Caco-2 (cell line): ENCODE measurements at regions of chr2 and their contacts with region 1.

Region 1: GRCh38 chr2:15636972-15637785 is 45.5 kb downstream of the DDX1 start:
- DNase-seq: peak; percentile 72 to 80
- H3K4me3 ChIP-seq: no peak overlapping the region
- H3K4me3 Mint-ChIP-seq: no peak overlapping the region
- H3K27ac Mint-ChIP-seq: no peak overlapping the region
- H3K4me1 ChIP-seq: peaks cover 55% of the 10 kb centered on the region
- H3K4me1 Mint-ChIP-seq: peaks cover 32% of the 10 kb centered on the region
- H3K27me3 ChIP-seq: no peaks in the 10 kb centered on the region
- H3K27me3 Mint-ChIP-seq: no peaks in the 10 kb centered on the region
- CTCF ChIP-seq: peak; percentile 85 to 98

Region 2: DNA sequence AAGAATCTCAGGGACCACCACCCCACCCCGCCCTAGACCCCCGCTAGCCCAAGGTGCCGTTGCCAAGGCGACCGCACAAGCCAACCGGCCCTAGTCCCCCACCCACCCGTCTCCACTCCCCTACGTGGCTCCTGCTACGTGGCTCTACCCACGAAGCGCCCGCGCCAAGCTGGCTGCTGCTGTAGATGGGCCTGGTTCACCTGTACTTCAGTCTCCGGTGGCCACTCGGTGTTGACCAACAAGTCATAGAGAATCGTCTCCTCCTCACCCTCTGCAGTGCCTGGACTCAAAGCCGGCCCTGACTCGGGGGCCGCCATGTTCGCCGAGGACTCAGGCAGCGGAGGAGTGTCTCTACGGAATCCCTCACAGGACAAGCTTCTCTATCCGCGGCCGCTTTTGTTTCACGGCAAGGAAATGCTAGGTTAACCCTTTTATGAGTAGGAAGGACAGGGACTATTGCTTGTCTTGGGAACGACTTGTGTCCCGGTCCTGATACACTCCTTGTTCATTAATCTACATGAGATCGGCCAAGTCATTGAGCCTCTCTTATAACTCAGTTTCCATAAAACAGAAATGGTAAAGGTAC is 76.1 kb before region 1 on chr2 and contains the start of gene NBAS:
- CTCF ChIA-PET with region 1: no interaction called
- POLR2A ChIA-PET with region 1: no interaction called
- intact Hi-C with region 1: no loop called
- DNase-seq: peak; percentile 90 to 92
- H3K4me3 ChIP-seq: peak within 1 kb of the TSS; percentile 91
- H3K4me3 Mint-ChIP-seq: peak within 1 kb of the TSS; percentile 79
- H3K27ac Mint-ChIP-seq: peak within 1 kb of the TSS; percentile 69
- H3K4me1 ChIP-seq: peaks cover 10% of the 10 kb centered on the region
- H3K4me1 Mint-ChIP-seq: peaks cover 12% of the 10 kb centered on the region
- H3K27me3 ChIP-seq: no peaks in the 10 kb centered on the region
- H3K27me3 Mint-ChIP-seq: no peaks in the 10 kb centered on the region
- CTCF ChIP-seq: no peak
- total RNA-seq, gene NBAS: 28.8 and 31.1 TPM in 2 replicates

Region 3: GRCh38 chr2:15769676-15770547 is 132.7 kb after region 1 on chr2:
- CTCF ChIA-PET with region 1: no interaction called
- POLR2A ChIA-PET with region 1: no interaction called
- intact Hi-C with region 1: loop called (anchors 1 kb)
- DNase-seq: no peak
- H3K4me3 ChIP-seq: no peak overlapping the region
- H3K4me3 Mint-ChIP-seq: no peak overlapping the region
- H3K27ac Mint-ChIP-seq: peak overlapping the region; percentile 53
- H3K4me1 ChIP-seq: peaks cover 44% of the 10 kb centered on the region
- H3K4me1 Mint-ChIP-seq: peaks cover 53% of the 10 kb centered on the region
- H3K27me3 ChIP-seq: no peaks in the 10 kb centered on the region
- H3K27me3 Mint-ChIP-seq: no peaks in the 10 kb centered on the region
- CTCF ChIP-seq: no peak

Region 4: GRCh38 chr2:16012619-16013358 is 375.6 kb after region 1 on chr2:
- CTCF ChIA-PET with region 1: no interaction called
- POLR2A ChIA-PET with region 1: no interaction called
- intact Hi-C with region 1: loop called (anchors 10 kb)
- DNase-seq: peak; percentile 83
- H3K4me3 ChIP-seq: peak overlapping the region; percentile 26; the same call in 1 of the 2 replicates
- H3K4me3 Mint-ChIP-seq: peak overlapping the region; percentile 75
- H3K27ac Mint-ChIP-seq: peak overlapping the region; percentile 96
- H3K4me1 ChIP-seq: peaks cover 18% of the 10 kb centered on the region; the same call in 1 of the 2 replicates
- H3K4me1 Mint-ChIP-seq: peaks cover 26% of the 10 kb centered on the region
- H3K27me3 ChIP-seq: no peaks in the 10 kb centered on the region
- H3K27me3 Mint-ChIP-seq: no peaks in the 10 kb centered on the region
- CTCF ChIP-seq: no peak

Region 5: DNA sequence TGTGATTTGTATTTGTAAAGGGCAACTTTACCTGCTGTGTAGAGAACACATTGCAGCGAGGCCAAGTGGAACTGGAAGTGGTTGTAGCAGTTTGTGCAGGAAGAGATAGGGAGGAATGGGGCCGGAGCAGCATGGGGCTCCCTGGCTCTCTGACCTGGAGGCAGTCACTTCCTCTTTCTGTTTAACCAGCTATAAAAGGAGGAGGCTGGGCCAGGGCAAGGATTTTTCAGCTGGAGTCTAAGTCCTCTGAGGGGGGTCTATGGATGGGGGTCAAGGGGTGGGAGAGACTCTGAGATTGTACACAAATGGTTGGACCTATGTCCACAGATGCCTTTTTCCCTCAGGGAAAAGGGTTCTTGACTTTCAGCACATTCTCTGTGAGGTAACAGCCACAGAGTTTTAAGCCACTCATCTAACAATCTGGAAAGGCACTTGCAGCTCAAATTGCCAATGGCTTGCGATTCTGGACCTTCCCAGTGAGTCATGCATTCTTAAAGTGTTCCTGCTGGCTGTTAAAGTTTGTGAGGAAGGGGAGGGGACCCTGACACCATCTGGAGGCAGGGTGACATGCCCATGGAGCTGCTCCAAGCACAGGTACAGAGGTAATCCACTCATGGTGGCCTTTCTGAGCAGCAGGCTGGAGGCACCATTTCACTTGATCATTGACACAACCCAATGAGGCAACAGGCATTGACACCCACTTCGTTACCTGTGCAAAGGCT is 681.5 kb after region 1 on chr2:
- CTCF ChIA-PET with region 1: no interaction called
- POLR2A ChIA-PET with region 1: no interaction called
- intact Hi-C with region 1: loop called (anchors 1 kb)
- DNase-seq: peak; percentile 71 to 85
- H3K4me3 ChIP-seq: no peak overlapping the region
- H3K4me3 Mint-ChIP-seq: peak overlapping the region; percentile 43
- H3K27ac Mint-ChIP-seq: peak overlapping the region; percentile 96
- H3K4me1 ChIP-seq: peaks cover 57% of the 10 kb centered on the region
- H3K4me1 Mint-ChIP-seq: peaks cover 44% of the 10 kb centered on the region
- H3K27me3 ChIP-seq: no peaks in the 10 kb centered on the region
- H3K27me3 Mint-ChIP-seq: no peaks in the 10 kb centered on the region
- CTCF ChIP-seq: no peak

Region 6: DNA sequence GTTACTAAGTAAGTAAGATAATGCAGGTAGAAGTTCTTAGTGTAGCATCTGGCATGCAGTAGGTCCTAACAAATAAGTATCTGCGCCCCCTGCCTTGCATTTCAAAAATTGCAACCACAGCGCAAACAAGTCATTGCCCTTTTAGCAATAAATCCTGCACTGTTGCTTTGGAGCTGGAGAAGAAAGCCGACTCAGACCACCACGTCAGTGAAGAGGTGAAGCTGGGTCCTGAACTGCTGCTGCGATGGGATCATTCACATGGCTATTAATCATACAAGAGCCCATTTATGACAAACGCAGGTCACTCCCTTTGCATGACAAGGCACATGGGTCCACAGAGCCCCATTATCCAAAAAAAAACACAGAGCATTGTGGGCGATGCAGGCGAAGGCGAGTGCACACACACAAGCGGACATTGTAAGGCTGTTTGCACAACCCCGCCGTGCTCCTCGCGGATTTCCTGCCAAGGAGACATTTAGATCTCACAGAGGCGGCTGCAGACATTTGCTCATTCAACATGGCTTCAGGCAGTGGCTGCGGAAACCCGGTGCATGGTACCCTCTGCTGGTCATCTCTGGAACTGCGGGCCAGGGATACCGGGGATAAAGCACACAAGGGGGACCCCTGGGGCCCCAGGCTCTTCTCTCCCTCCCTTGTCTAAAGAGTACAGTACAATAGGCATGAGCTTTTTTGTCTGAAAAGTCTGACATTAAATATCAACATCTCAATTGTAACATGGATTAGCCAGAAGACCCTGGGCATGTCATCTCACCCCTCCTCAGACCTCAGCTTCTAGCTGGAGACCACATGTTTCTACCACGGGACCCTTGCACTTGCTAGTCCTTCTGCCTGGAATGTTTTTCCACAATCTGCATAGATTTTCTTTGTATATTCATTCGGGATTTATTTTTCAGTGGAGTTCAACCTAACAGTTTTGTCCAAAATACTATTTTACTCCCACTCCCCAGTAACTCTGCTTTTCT is 971.8 kb after region 1 on chr2:
- CTCF ChIA-PET with region 1: interaction called, 3 read pairs
- POLR2A ChIA-PET with region 1: no interaction called
- intact Hi-C with region 1: loop called (anchors 1 kb)
- DNase-seq: peak; percentile 86 to 92
- H3K4me3 ChIP-seq: peak overlapping the region; percentile 53
- H3K4me3 Mint-ChIP-seq: peak overlapping the region; percentile 77
- H3K27ac Mint-ChIP-seq: peak overlapping the region; percentile 34
- H3K4me1 ChIP-seq: no peaks in the 10 kb centered on the region
- H3K4me1 Mint-ChIP-seq: peaks cover 7% of the 10 kb centered on the region
- H3K27me3 ChIP-seq: no peaks in the 10 kb centered on the region
- H3K27me3 Mint-ChIP-seq: peaks cover 7% of the 10 kb centered on the region
- CTCF ChIP-seq: peak; percentile 93 to 95